Activated CD4-positive, alpha-beta T cell treated with anti-CD3 and anti-CD28 coated beads, Interleukin-2, amount 10 ng/mL, durations not matched to agents 7 days and 5 days (primary cell): ENCODE measurements at regions of chr17 and their contacts with region 1.

Region 1: GRCh38 chr17:35900708-35901480 is 20.7 kb upstream of the CCL5 start:
- DNase-seq: no peak
- H3K4me3 Mint-ChIP-seq: peak overlapping the region; percentile 4
- H3K27ac Mint-ChIP-seq: peak overlapping the region; percentile 52
- H3K4me1 Mint-ChIP-seq: peaks cover 57% of the 10 kb centered on the region
- H3K27me3 Mint-ChIP-seq: peaks cover 7% of the 10 kb centered on the region

Region 2: DNA sequence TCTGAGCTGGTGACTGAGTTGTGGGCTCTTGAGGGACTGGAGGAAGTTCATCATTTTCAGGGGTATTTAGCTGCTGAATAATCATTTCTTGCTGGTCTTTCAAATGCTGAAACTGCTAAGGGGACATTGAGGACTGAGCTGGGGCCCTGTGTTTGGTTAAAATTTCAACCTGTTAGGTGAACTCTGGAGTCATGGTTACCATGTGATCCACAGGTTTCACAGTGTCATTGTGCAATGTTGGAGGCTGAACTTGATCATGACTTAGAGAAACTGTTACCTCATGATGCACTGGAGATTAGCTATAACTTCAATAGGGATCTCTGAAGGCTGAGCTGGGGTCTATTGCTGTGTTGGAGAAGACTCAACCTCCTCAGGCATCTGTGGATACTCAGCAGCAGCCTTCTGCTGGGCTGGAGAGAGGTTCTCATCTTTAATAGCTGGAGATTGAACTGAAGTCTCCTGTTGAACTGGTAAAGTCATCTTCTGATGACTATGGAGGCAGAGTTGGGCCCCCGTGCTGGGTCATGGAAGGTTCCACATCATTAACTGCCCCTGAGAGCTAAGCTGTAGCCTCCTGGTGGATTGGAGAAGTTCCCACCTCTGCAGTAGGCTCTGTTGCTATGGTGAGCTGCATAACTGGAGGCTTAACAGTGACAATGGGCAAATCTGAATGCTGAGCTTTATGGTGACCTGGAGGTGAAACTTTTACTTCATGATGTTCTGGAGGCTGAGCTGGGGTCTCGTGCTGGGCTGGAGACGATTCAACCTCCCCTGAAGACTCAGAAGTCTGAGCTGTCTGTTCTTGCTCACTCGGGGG is 14.5 kb after region 1 on chr17:
- CTCF ChIA-PET with region 1: interaction called, 25 read pairs
- POLR2A ChIA-PET with region 1: no interaction called
- DNase-seq: no peak
- H3K4me3 Mint-ChIP-seq: no peak overlapping the region
- H3K27ac Mint-ChIP-seq: no peak overlapping the region
- H3K4me1 Mint-ChIP-seq: peaks cover 22% of the 10 kb centered on the region
- H3K27me3 Mint-ChIP-seq: no peaks in the 10 kb centered on the region